ENCODE measurements at regions of chr1 and their contacts with region 1.

Region 1: GRCh38 chr1:33286451-33287185 is 30.3 kb downstream of the ZNF362 start:
- DNase-seq: no peak
- H3K4me3 ChIP-seq: no peak overlapping the region
- H3K27ac ChIP-seq: no peak overlapping the region
- H3K4me1 ChIP-seq: no peaks in the 10 kb centered on the region
- H3K27me3 ChIP-seq: no peaks in the 10 kb centered on the region
- CTCF ChIP-seq: no peak
- EP300 ChIP-seq: no peak
- POLR2A ChIP-seq: no peak

Region 2: GRCh38 chr1:32509939-32510338 is 776.7 kb before region 1 on chr1:
- in situ Hi-C with region 1: no loop called
- intact Hi-C with region 1: loop called (anchors 5 kb)
- DNase-seq: no peak
- H3K4me3 ChIP-seq: no peak overlapping the region
- H3K27ac ChIP-seq: no peak overlapping the region
- H3K4me1 ChIP-seq: no peaks in the 10 kb centered on the region
- H3K27me3 ChIP-seq: no peaks in the 10 kb centered on the region
- CTCF ChIP-seq: no peak
- EP300 ChIP-seq: no peak
- POLR2A ChIP-seq: no peak

Measured in transverse colon (tissue), 4 donors.